ENCODE measurements at regions of chr7 and their contacts with region 1.

Region 1: GRCh38 chr7:31134246-31135188 is 82.4 kb downstream of the ADCYAP1R1 start:
- DNase-seq: no peak
- H3K4me3 ChIP-seq: no peak overlapping the region
- CTCF ChIP-seq: peak; percentile 76

Region 2: DNA sequence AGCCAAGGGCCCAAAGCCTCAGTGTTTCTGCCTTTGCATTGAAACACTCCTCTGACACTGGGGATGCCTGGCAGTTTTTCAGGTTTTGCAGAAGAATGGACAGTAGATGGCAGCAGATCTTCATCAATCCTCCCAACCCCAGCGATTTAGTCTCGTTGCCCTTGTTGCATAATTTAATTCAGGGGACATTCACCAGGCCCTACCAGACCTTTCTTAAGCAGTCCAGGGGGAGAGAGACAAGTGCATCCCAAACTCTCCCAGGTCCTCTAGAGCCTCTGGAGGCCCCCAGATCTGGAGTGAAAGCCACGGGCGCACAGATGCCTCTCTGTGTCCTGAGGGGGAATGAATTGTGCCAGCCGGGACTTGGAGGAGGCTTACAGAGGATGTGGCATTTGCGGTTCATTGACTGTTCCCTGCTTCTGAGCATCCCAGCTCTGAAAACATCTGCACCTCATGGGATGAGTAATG is 333.7 kb before region 1 on chr7:
- CTCF ChIA-PET with region 1: interaction called, 11 read pairs
- POLR2A ChIA-PET with region 1: no interaction called
- DNase-seq: no peak
- H3K4me3 ChIP-seq: no peak overlapping the region
- CTCF ChIP-seq: peak; percentile 65

Region 3: GRCh38 chr7:30983042-30983913 is 151.2 kb before region 1 on chr7:
- CTCF ChIA-PET with region 1: interaction called, 427 read pairs
- POLR2A ChIA-PET with region 1: no interaction called
- DNase-seq: no peak
- H3K4me3 ChIP-seq: no peak overlapping the region
- CTCF ChIP-seq: peak; percentile 92

Region 4: DNA sequence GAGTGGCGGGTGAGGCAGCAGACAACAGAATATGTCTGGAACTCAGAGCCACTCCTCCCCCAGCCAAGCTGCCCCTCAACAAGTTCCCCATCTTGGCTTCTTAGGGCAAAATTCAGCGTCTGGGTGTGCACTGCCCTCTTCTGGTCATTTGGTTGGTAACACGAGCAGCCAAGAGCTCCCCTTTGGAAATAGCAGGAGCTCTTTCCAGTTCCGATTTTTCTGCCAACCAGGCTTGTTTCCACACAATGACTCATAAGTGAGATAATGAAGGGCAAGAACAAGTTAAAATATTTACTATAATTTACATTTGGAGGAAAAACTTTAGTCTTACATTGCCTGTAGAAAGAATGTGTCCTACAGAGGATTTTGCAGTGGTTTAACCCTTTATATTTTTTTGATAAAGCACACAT is 11.9 kb before region 1 on chr7:
- CTCF ChIA-PET with region 1: interaction called, 151 read pairs
- POLR2A ChIA-PET with region 1: no interaction called
- DNase-seq: peak; percentile 60
- H3K4me3 ChIP-seq: no peak overlapping the region
- CTCF ChIP-seq: peak; percentile 77

Region 5: DNA sequence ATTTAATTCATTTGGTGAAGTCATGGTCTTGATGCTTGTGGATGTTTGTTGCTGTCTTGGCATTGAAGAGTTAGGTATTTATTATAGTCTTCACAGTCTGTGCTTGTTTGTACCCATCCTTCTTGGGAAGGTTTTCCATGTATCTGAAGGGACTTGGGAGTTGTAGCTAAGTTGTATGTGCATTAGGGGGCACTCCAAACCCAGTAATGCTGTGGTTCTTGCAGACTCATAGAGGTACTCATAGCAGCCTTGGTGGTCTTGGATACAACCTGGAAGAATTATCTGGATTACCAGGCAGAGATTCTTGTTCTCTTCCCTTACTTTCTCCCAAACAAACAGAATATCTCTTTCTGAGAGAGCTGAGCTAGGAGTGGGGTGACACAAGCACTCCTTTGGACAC is 10.8 kb after region 1 on chr7:
- CTCF ChIA-PET with region 1: interaction called, 12 read pairs
- POLR2A ChIA-PET with region 1: no interaction called
- DNase-seq: no peak
- H3K4me3 ChIP-seq: no peak overlapping the region
- CTCF ChIP-seq: no peak

Region 6: DNA sequence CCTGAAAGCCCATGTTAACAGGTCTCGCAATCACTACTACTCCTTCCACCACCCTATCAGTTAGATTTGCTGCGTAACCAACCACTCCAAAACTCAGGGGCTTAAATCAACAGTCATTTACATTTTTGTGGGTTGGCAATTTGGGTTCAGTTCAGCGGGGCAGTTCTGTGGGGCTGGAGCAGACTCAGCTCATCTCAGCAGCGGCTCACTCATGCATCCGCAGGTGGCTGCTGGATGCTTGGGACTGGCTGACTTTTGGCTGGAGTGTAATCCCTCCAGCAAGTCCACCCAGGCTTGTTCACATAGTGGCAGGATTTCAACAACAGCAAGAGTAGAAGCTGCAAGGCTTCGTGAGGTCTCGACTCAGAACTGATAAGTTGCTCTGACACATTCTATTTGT is 126.8 kb after region 1 on chr7:
- CTCF ChIA-PET with region 1: no interaction called
- POLR2A ChIA-PET with region 1: no interaction called
- DNase-seq: no peak
- H3K4me3 ChIP-seq: no peak overlapping the region
- CTCF ChIP-seq: no peak

Region 7: GRCh38 chr7:31327071-31327470 is 192.6 kb after region 1 on chr7:
- CTCF ChIA-PET with region 1: no interaction called
- POLR2A ChIA-PET with region 1: no interaction called
- DNase-seq: no peak
- H3K4me3 ChIP-seq: no peak overlapping the region
- CTCF ChIP-seq: no peak

Region 8: DNA sequence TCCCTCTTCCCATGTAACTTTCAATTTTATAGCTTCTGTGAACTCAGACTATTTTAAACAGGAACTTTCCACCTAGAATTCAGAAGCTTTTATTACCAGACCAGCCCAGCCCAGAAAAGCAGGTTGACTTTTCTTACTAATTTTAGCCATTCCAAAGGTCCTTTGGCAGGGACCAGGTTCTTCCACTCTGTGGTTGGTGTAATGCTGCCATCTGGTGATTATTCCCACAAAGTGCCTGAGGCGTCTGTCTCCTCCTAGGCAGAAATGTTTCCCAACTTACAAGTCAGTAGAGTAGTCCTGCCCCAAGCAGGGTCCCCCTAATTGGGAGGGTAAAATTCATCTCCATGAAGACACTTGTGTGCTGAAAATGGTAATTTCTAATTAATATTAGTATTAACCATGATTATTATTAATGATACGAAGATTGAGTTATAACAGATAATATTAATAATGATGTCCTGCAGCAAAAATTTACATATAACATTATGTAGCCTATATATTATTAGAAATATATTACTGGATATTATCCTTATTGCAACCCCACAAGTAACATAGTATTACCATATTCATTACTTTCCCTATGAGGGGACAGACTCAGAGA is 499.5 kb after region 1 on chr7:
- CTCF ChIA-PET with region 1: interaction called, 32 read pairs
- POLR2A ChIA-PET with region 1: no interaction called
- DNase-seq: peak; percentile 19
- H3K4me3 ChIP-seq: no peak overlapping the region
- CTCF ChIP-seq: peak; percentile 52

Region 9: DNA sequence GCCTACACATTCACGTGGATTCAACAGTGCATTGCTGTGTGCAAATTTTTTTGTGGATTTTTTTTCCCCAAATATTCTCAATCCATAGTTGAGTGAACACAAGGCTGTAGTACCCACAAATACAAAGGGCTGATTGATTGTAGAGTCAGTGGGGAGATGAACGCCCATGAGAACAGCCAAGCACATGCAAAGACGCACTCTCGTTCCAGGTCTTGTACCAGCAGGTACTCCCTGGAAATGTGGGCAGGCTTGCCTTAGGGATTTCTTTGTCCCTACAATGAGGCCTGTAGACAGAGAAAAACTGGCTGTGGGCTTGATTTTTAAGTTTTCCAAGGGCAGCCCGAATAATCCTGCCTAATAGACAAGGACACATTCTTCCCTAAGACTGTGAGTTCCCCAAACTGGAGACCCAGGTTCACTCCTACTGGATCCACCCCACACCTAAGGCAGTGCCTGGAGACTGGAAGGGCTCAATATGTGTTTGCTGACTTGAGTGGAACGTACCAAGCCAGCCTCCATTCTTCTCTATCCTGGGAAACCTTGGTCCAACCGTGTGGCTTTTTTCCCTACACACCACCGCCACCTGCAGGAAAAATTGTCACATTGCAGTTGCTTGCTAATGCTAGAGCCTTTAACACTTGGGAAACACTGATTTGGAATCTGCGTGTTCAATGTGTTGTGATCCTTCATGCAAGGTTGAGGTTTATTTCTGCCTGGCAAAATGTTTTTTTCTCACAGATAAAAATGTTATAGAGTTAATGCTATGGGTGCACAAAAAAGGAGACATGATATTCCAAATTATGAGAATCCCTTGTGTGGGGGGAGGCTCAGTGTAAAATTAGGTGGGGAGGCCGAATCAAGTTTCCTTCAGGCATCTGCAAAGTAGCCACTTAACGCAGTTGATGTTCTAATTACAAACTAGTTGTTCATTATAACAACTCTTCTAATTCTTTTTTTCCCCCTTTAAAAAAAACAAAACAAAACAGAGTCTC is 601.8 kb after region 1 on chr7:
- CTCF ChIA-PET with region 1: interaction called, 10 read pairs
- POLR2A ChIA-PET with region 1: no interaction called
- DNase-seq: no peak
- H3K4me3 ChIP-seq: no peak overlapping the region
- CTCF ChIP-seq: peak; percentile 81